Activated CD4-positive, alpha-beta T cell treated with anti-CD3 and anti-CD28 coated beads for 36 hours (primary cell): ENCODE measurements at regions of chr16 and their contacts with region 1.

Region 1: GRCh38 chr16:28823872-28824716 is 1.3 kb downstream of the ATXN2L start:
- DNase-seq: peak; percentile 98
- ATAC-seq: peak; percentile 80
- H3K4me3 Mint-ChIP-seq: peak overlapping the region; percentile 96
- H3K27ac Mint-ChIP-seq: peak overlapping the region; percentile 100
- H3K4me1 Mint-ChIP-seq: peaks cover 45% of the 10 kb centered on the region
- H3K27me3 Mint-ChIP-seq: no peaks in the 10 kb centered on the region

Region 2: DNA sequence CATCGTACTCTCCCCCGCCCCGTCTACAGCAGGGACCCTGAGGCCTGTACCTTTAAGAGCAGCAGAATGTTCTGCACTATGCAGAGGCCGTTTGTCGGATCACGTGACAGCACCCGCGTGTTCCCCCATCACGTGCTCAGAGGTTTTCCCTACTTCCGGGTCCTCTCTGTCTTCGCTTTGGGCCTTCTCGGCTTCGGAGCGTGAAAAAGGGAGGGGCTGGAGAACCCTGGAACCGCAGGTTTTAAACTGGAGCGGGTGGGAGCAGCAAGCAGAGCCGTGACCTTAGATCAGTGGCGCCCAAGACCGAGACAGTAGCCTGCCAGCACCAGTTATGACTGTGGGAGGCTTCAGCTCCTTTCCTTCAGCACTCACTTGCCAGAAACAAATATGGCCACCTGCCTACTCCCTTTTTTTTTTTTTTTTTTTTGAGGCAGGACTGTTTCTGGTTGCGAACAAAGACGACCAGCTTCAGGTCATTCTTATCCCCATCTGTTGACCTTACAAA is 332.1 kb before region 1 on chr16 and contains the start of gene CLN3:
- CTCF ChIA-PET with region 1: no interaction called
- POLR2A ChIA-PET with region 1: no interaction called
- intact Hi-C with region 1: loop called in 1 of 2 experiments (anchors 1 kb)
- DNase-seq: peak; percentile 94
- ATAC-seq: peak; percentile 64
- H3K4me3 Mint-ChIP-seq: peak within 1 kb of the TSS; percentile 94
- H3K27ac Mint-ChIP-seq: peak within 1 kb of the TSS; percentile 100
- H3K4me1 Mint-ChIP-seq: peaks cover 60% of the 10 kb centered on the region
- H3K27me3 Mint-ChIP-seq: no peaks in the 10 kb centered on the region
- total RNA-seq, gene CLN3: 19.0 to 24.6 TPM

Region 3: DNA sequence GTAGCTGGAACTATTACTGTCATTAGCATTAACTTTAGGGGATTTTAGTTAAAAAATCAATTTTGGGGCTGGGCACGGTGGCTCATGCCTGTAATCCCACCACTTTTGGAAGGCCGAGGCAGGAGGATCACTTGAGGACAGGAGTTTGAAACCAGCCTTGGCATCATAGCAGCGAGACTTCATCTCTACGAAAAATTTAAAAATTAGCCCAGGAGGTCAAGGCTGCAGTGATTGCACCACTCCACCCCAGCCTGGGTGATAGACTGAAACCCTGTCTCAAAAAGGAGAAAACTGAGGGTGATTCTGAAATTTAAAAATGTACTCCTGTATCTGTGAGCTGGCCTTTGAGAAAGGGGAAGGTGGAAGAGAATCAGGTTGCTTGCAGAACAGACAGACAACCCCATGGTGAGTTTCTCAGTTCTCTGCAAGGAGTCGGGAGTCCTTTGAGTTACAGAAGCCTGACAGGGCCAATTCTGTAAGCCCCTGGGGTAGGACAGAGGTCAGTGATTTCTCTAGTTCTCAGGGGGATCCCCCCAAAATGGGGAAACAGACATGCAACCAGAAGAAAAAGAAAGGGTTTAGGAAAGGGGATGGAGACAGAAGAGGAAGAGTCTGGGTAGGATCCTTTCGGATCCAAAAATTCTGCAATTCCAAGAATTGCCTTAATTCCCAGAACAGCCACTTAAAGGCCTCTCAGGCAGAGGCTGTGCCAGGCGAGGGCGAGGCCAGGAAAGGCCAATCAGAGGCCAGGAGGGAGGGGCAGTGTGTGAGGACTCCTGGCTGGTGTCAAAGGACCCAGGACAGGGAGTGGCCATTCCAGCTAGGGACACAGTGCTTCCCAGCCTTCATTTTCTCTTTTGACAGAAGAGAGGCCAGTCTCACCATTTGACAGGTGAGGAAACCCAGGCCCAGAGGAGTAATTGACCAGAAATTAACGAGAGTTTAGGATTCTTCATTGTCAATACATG is 292.0 kb before region 1 on chr16:
- CTCF ChIA-PET with region 1: no interaction called
- POLR2A ChIA-PET with region 1: no interaction called
- intact Hi-C with region 1: no loop called
- DNase-seq: no peak
- ATAC-seq: no peak
- H3K4me3 Mint-ChIP-seq: no peak overlapping the region
- H3K27ac Mint-ChIP-seq: no peak overlapping the region
- H3K4me1 Mint-ChIP-seq: peaks cover 28% of the 10 kb centered on the region
- H3K27me3 Mint-ChIP-seq: no peaks in the 10 kb centered on the region

Region 4: GRCh38 chr16:28863929-28864793 is 40.1 kb after region 1 on chr16:
- CTCF ChIA-PET with region 1: interaction called, 3 read pairs
- POLR2A ChIA-PET with region 1: interaction called, 15 read pairs
- intact Hi-C with region 1: loop called in 1 of 2 experiments (anchors 1 kb)
- DNase-seq: peak; percentile 44
- ATAC-seq: no peak
- H3K4me3 Mint-ChIP-seq: peak overlapping the region; percentile 96
- H3K27ac Mint-ChIP-seq: peak overlapping the region; percentile 96
- H3K4me1 Mint-ChIP-seq: peaks cover 21% of the 10 kb centered on the region
- H3K27me3 Mint-ChIP-seq: no peaks in the 10 kb centered on the region

Region 5: GRCh38 chr16:28943281-28943680 is 119.2 kb after region 1 on chr16:
- CTCF ChIA-PET with region 1: interaction called, 4 read pairs
- POLR2A ChIA-PET with region 1: no interaction called
- intact Hi-C with region 1: loop called in 1 of 2 experiments (anchors 1 kb)
- DNase-seq: no peak
- ATAC-seq: no peak
- H3K4me3 Mint-ChIP-seq: no peak overlapping the region
- H3K27ac Mint-ChIP-seq: no peak overlapping the region
- H3K4me1 Mint-ChIP-seq: peaks cover 7% of the 10 kb centered on the region
- H3K27me3 Mint-ChIP-seq: no peaks in the 10 kb centered on the region

Region 6: GRCh38 chr16:29815793-29816693 is 991.9 kb after region 1 on chr16 and contains the start of gene PAGR1:
- CTCF ChIA-PET with region 1: no interaction called
- POLR2A ChIA-PET with region 1: no interaction called
- intact Hi-C with region 1: loop called in 1 of 2 experiments (anchors 2 kb)
- DNase-seq: peak; percentile 99
- ATAC-seq: peak; percentile 72
- H3K4me3 Mint-ChIP-seq: peak within 1 kb of the TSS; percentile 84
- H3K27ac Mint-ChIP-seq: peak within 1 kb of the TSS; percentile 97
- H3K4me1 Mint-ChIP-seq: peaks cover 57% of the 10 kb centered on the region
- H3K27me3 Mint-ChIP-seq: no peaks in the 10 kb centered on the region
- total RNA-seq, gene PAGR1: 20.6 to 25.6 TPM

Region 7: DNA sequence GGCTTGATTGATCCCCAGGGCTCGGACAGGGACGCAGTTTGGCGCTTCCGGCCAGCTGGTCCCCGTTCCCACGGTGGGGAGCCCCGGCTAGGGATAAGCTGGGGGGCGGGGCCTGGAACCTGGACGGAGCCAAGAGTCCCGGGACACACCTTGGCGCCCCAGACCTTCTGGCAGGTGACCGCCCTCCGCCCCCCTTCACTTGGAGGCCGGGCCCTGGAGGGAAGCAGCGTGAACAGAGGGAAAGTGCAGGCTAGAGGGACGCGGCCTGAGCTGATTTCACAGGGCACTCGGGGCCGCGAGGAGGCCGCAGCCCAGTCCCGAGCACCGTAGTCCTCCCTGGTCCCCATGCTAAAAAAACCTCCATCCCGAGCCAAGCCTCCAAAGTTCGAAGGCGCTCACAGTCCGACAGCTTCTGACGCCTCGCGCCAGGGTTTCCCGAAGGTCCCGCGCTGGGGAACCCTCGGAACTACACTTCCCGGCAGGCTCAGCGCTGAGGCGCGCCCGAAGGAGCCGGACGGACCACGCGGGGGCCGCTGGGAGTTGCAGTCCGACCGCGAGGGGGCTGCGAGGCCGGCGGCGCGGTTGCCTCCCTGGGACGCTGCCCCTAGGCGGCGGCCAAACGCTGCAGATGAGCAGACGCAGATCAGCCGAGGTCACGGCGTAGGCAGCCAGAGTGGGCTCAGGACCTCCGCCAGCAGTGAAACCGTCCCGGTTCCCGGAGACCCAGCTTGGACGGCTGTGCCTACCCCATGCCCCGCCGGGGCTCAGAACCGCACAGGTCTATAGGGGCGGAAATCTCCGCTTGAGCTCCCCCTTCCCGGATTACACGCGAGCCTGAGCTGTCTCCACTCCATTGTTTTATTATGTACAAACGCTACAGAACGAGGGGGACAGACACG is 1267.6 kb after region 1 on chr16 and contains the start of gene TBX6:
- CTCF ChIA-PET with region 1: no interaction called
- POLR2A ChIA-PET with region 1: no interaction called
- intact Hi-C with region 1: loop called in 1 of 2 experiments (anchors 10 kb)
- DNase-seq: peak; percentile 97
- ATAC-seq: peak; percentile 83
- H3K4me3 Mint-ChIP-seq: peak within 1 kb of the TSS; percentile 84
- H3K27ac Mint-ChIP-seq: peak within 1 kb of the TSS; percentile 92
- H3K4me1 Mint-ChIP-seq: peaks cover 51% of the 10 kb centered on the region
- H3K27me3 Mint-ChIP-seq: no peaks in the 10 kb centered on the region
- total RNA-seq, gene TBX6: 2.7 to 3.0 TPM